B cell (primary cell): ENCODE measurements at regions of chr1 and their contacts with region 1.

Region 1: GRCh38 chr1:157580179-157580827 is 17.6 kb downstream of the FCRL4 start:
- DNase-seq: peak; percentile 83
- ATAC-seq: peak; percentile 44
- H3K4me3 ChIP-seq: no peak overlapping the region
- H3K4me3 Mint-ChIP-seq: no peak overlapping the region
- H3K27ac ChIP-seq: no peak overlapping the region
- H3K27ac Mint-ChIP-seq: no peak overlapping the region
- H3K4me1 ChIP-seq: peaks cover 61 to 62% of the 10 kb centered on the region in 2 donors
- H3K4me1 Mint-ChIP-seq: peaks cover 70% of the 10 kb centered on the region
- H3K27me3 ChIP-seq: no peaks in the 10 kb centered on the region
- H3K27me3 Mint-ChIP-seq: no peaks in the 10 kb centered on the region
- CTCF ChIP-seq: peak; percentile 94

Region 2: GRCh38 chr1:157090196-157090647 is 490.1 kb before region 1 on chr1:
- CTCF ChIA-PET with region 1: no interaction called
- POLR2A ChIA-PET with region 1: no interaction called
- intact Hi-C with region 1: no loop called
- DNase-seq: peak; percentile 83
- ATAC-seq: peak; percentile 78
- H3K4me3 ChIP-seq: no peak overlapping the region
- H3K4me3 Mint-ChIP-seq: no peak overlapping the region
- H3K27ac ChIP-seq: no peak overlapping the region
- H3K27ac Mint-ChIP-seq: no peak overlapping the region
- H3K4me1 ChIP-seq: no peaks in the 10 kb centered on the region
- H3K4me1 Mint-ChIP-seq: no peaks in the 10 kb centered on the region
- H3K27me3 ChIP-seq: peaks cover 0 to 5% (median 0%) of the 10 kb centered on the region in 4 experiments
- H3K27me3 Mint-ChIP-seq: peaks cover 7% of the 10 kb centered on the region
- CTCF ChIP-seq: peak; percentile 97

Region 3: DNA sequence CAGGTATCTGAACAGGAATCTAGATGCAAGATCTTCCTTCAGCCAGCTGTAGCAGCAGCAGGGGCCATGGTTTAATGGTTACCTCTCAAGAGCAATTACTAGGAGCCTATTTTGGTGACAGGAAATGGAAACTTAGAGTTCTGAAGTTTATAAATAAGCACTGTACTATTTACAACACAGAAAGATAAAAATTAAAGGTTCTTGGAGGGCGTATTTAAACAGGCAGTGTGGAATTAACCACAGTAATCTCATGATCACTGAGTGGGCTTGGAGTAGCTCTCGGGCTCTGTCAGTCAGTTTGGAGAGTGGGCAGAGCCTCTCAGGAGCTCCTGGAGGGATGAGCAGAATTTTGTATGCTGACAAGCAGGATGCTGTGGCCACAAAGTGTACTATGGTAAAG is 17.8 kb before region 1 on chr1:
- CTCF ChIA-PET with region 1: interaction called, 35 read pairs
- POLR2A ChIA-PET with region 1: no interaction called
- intact Hi-C with region 1: loop called (anchors 1 kb)
- DNase-seq: no peak
- ATAC-seq: peak; percentile 19
- H3K4me3 ChIP-seq: peak overlapping the region in 3 of 5 experiments; percentile 13 to 22 (median 18)
- H3K4me3 Mint-ChIP-seq: peak overlapping the region; percentile 68
- H3K27ac ChIP-seq: peak overlapping the region in 1 of 2 donors; percentile 15
- H3K27ac Mint-ChIP-seq: peak overlapping the region; percentile 51
- H3K4me1 ChIP-seq: peaks cover 64 to 65% of the 10 kb centered on the region in 2 donors
- H3K4me1 Mint-ChIP-seq: peaks cover 58% of the 10 kb centered on the region
- H3K27me3 ChIP-seq: no peaks in the 10 kb centered on the region
- H3K27me3 Mint-ChIP-seq: no peaks in the 10 kb centered on the region
- CTCF ChIP-seq: no peak

Region 4: DNA sequence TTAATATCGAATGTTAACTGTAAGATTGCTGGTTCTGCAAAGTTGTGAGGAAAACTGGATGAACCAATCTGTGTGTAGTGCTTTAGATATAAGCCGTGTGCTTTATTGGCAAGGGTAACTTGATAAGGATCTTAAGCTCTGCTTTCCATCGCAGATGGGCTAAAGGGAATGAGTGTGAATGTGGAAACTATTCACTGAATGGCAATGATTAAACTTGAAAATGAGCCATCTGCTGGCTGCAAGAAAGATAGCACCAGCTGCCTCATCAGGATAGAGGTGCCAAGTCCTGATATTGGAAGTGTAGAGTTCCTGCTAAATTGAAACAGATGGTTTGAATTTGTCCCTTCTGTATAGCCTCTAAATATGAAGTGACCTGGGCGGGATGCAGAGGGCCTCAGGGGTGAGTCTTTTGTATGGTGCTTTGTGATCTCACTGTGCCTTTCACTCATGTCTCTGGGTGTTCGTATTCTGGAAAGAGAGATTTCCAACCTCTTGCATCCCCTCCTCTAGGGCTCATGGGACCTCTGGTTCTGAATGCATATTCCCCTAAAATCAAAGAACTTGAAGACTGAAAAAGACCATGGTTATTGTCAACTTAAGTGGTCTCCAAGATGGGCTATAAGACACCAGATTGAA is 111.1 kb after region 1 on chr1:
- CTCF ChIA-PET with region 1: interaction called, 130 read pairs
- POLR2A ChIA-PET with region 1: no interaction called
- intact Hi-C with region 1: loop called (anchors 1 kb)
- DNase-seq: peak; percentile 51
- ATAC-seq: peak; percentile 41
- H3K4me3 ChIP-seq: no peak overlapping the region
- H3K4me3 Mint-ChIP-seq: no peak overlapping the region
- H3K27ac ChIP-seq: peak overlapping the region in 1 of 2 donors; percentile 32
- H3K27ac Mint-ChIP-seq: peak overlapping the region; percentile 54
- H3K4me1 ChIP-seq: peaks cover 40 to 68% of the 10 kb centered on the region in 2 donors
- H3K4me1 Mint-ChIP-seq: peaks cover 77% of the 10 kb centered on the region
- H3K27me3 ChIP-seq: no peaks in the 10 kb centered on the region
- H3K27me3 Mint-ChIP-seq: no peaks in the 10 kb centered on the region
- CTCF ChIP-seq: peak; percentile 73

Region 5: GRCh38 chr1:157734321-157734720 is 154.0 kb after region 1 on chr1:
- CTCF ChIA-PET with region 1: interaction called, 12 read pairs
- POLR2A ChIA-PET with region 1: no interaction called
- intact Hi-C with region 1: no loop called
- DNase-seq: peak; percentile 55
- ATAC-seq: peak; percentile 79
- H3K4me3 ChIP-seq: no peak overlapping the region
- H3K4me3 Mint-ChIP-seq: peak overlapping the region; percentile 66
- H3K27ac ChIP-seq: peak overlapping the region; percentile 65 to 83
- H3K27ac Mint-ChIP-seq: peak overlapping the region; percentile 89
- H3K4me1 ChIP-seq: peaks cover 51 to 55% of the 10 kb centered on the region in 2 donors
- H3K4me1 Mint-ChIP-seq: peaks cover 76% of the 10 kb centered on the region
- H3K27me3 ChIP-seq: no peaks in the 10 kb centered on the region
- H3K27me3 Mint-ChIP-seq: no peaks in the 10 kb centered on the region
- CTCF ChIP-seq: no peak

Region 6: DNA sequence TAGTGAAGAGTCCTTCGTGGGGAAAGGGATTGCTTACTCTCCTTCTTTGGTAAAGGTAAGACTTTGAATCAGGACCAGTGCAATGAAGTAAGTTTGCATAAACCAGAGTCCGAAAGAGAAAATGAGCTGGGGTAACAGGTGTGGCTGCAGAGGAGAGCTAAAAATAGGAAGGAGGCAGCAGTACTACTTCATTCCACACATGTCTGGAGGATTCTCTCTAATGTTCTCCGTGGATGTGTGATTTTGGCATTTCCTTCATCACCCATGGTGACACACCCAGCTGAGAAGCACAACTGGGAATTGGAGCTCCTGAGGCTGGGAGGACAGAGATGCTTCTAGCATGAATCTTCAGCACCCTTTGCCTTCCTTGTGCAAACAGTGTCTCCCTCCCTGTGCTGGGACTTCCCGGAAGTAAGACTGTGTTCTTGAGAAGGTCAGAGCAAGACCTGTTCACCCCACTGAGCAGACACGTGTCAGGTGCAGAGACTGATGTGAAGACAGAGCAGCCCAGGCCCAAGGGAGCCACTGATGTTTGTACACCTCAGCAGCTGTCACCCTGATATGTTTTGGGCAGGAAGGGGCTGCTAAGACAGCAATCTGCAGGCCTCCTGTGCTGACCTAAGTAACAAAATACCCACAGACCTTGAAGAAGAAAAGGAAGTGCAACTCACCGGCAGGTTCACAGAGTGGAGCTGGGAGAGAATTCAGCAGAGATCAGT is 226.3 kb after region 1 on chr1:
- CTCF ChIA-PET with region 1: interaction called, 29 read pairs
- POLR2A ChIA-PET with region 1: interaction called, 5 read pairs
- intact Hi-C with region 1: no loop called
- DNase-seq: peak; percentile 92
- ATAC-seq: peak; percentile 92
- H3K4me3 ChIP-seq: peak overlapping the region; percentile 2 to 45 (median 28)
- H3K4me3 Mint-ChIP-seq: peak overlapping the region; percentile 84
- H3K27ac ChIP-seq: peak overlapping the region; percentile 71 to 83
- H3K27ac Mint-ChIP-seq: peak overlapping the region; percentile 87
- H3K4me1 ChIP-seq: peaks cover 86 to 98% of the 10 kb centered on the region in 2 donors
- H3K4me1 Mint-ChIP-seq: peaks cover 87% of the 10 kb centered on the region
- H3K27me3 ChIP-seq: no peaks in the 10 kb centered on the region
- H3K27me3 Mint-ChIP-seq: no peaks in the 10 kb centered on the region
- CTCF ChIP-seq: no peak

Region 7: DNA sequence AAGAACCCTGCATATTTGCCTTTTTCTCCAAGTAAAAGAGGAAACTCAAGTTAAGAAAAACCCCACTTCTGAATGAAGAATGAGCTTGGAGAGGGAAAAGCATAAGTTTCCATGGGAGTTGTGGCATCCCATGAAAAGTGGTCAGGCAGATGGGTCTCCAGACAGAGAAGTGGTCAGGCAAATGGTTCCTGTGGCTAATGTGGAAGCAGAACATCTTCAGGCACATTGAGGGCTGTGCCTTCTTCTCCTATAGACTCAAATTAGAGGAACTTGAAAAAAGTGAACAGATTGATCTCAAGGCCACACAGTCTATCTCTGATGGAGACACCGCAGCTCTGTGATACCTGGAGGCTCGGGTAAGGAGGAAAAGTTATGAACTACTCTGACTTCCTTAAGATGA is 357.4 kb after region 1 on chr1:
- CTCF ChIA-PET with region 1: interaction called, 16 read pairs
- POLR2A ChIA-PET with region 1: no interaction called
- intact Hi-C with region 1: no loop called
- DNase-seq: no peak
- ATAC-seq: no peak
- H3K4me3 ChIP-seq: no peak overlapping the region
- H3K4me3 Mint-ChIP-seq: no peak overlapping the region
- H3K27ac ChIP-seq: no peak overlapping the region
- H3K27ac Mint-ChIP-seq: no peak overlapping the region
- H3K4me1 ChIP-seq: no peaks in the 10 kb centered on the region
- H3K4me1 Mint-ChIP-seq: no peaks in the 10 kb centered on the region
- H3K27me3 ChIP-seq: peaks cover 0 to 19% (median 12%) of the 10 kb centered on the region in 4 experiments
- H3K27me3 Mint-ChIP-seq: peaks cover 9% of the 10 kb centered on the region
- CTCF ChIP-seq: no peak